Body of pancreas (tissue), 4 donors: ENCODE measurements at regions of chr6 and their contacts with region 1.

Region 1: GRCh38 chr6:32744776-32745175 is 3.6 kb downstream of the HLA-DQA2 start:
- DNase-seq: no peak
- ATAC-seq: no peak
- H3K4me3 ChIP-seq: no peak overlapping the region
- H3K27ac ChIP-seq: no peak overlapping the region
- H3K4me1 ChIP-seq: no peaks in the 10 kb centered on the region
- H3K27me3 ChIP-seq: no peaks in the 10 kb centered on the region
- CTCF ChIP-seq: no peak
- POLR2A ChIP-seq: no peak

Region 2: DNA sequence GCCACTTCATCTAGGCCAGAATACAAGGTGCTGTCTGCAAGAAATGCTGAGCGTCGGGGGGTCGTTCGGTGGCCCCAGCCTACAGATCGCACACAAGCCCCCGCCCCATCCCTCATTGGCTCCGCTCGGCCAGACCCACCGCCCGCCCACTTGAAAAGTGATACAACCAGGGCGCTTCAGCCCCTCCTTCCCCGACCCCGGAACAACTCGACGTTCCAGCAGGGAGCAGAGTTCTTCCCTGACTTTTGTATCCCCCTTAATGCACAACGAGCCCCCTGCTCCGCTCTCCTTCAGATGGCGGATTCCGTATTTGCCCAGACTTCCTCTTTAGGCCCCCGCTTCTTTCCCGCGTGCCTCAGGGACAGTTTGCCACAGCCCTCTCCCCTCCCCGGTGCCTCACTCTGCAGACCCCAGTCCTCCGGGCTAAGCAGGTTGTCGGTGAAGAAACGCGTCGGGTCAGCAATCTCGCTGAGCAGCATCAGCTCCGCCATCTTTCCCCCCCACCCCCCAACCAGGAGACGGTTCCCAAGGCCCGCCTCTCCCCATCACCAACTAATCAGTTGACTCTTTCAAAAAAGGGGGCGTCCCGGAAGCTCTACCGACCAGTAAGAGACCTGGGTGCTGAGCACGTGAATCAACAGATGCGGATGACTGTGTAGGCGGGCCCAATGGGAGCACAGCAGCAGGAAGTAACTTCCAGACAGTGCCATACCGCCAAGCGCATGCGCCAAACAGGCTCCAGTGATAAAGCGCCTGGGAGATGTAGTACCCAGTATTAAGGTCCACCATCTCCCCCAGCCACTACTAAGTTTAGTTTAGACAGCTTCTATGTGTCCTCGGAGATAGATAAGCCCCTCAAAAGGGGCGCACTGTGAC is 616.8 kb before region 1 on chr6 and contains the start of gene ATF6B:
- intact Hi-C with region 1: no loop called
- DNase-seq: peak; percentile 98 to 100 (median 100)
- ATAC-seq: peak; percentile 91
- H3K4me3 ChIP-seq: peak within 1 kb of the TSS; percentile 72 to 88
- H3K27ac ChIP-seq: peak within 1 kb of the TSS; percentile 68 to 95 (median 86)
- H3K4me1 ChIP-seq: peaks cover 38% of the 10 kb centered on the region
- H3K27me3 ChIP-seq: no peaks in the 10 kb centered on the region
- CTCF ChIP-seq: no peak
- POLR2A ChIP-seq: peak in 2 of 3 donors; percentile 76 to 81
- total RNA-seq, gene ATF6B: 26.5 to 32.3 TPM

Region 3: GRCh38 chr6:32614366-32615081 is 130.3 kb before region 1 on chr6:
- intact Hi-C with region 1: no loop called
- DNase-seq: no peak
- ATAC-seq: no peak
- H3K4me3 ChIP-seq: no peak overlapping the region
- H3K27ac ChIP-seq: no peak overlapping the region
- H3K4me1 ChIP-seq: no peaks in the 10 kb centered on the region
- H3K27me3 ChIP-seq: no peaks in the 10 kb centered on the region
- CTCF ChIP-seq: no peak
- POLR2A ChIP-seq: no peak

Region 4: GRCh38 chr6:32642720-32643106 is 102.1 kb before region 1 on chr6:
- intact Hi-C with region 1: loop called (anchors 5 kb)
- DNase-seq: no peak
- ATAC-seq: no peak
- H3K4me3 ChIP-seq: no peak overlapping the region
- H3K27ac ChIP-seq: no peak overlapping the region
- H3K4me1 ChIP-seq: no peaks in the 10 kb centered on the region
- H3K27me3 ChIP-seq: no peaks in the 10 kb centered on the region
- CTCF ChIP-seq: no peak
- POLR2A ChIP-seq: no peak